ENCODE measurements at regions of chr18 and their contacts with region 1.

Region 1: GRCh38 chr18:51197661-51198424 is at the start of gene MEX3C:
- DNase-seq: peak; percentile 96 to 100 (median 99)
- H3K4me3 ChIP-seq: peak within 1 kb of the TSS; percentile 68 to 95 (median 86)
- H3K27ac ChIP-seq: peak within 1 kb of the TSS; percentile 74 to 99 (median 94)
- H3K27me3 ChIP-seq: no peaks in the 10 kb centered on the region
- CTCF ChIP-seq: peak in 54 of 56 donors; percentile 18 to 70 (median 50)
- total RNA-seq, gene MEX3C: 16.1 to 34.8 (median 23.9) TPM

Region 2: GRCh38 chr18:50287441-50288347 is 910.1 kb before region 1 on chr18 and contains the start of gene CXXC1:
- intact Hi-C with region 1: loop called in 1 of 2 experiments (anchors 10 kb)
- DNase-seq: peak; percentile 97 to 100 (median 99)
- H3K4me3 ChIP-seq: peak within 1 kb of the TSS; percentile 52 to 98 (median 83)
- H3K27ac ChIP-seq: peak within 1 kb of the TSS; percentile 68 to 98 (median 93)
- H3K27me3 ChIP-seq: no peaks in the 10 kb centered on the region
- CTCF ChIP-seq: peak in 52 of 56 donors; percentile 25 to 70 (median 53)
- total RNA-seq, gene CXXC1: 39.4 to 103 (median 69.4) TPM

Region 3: DNA sequence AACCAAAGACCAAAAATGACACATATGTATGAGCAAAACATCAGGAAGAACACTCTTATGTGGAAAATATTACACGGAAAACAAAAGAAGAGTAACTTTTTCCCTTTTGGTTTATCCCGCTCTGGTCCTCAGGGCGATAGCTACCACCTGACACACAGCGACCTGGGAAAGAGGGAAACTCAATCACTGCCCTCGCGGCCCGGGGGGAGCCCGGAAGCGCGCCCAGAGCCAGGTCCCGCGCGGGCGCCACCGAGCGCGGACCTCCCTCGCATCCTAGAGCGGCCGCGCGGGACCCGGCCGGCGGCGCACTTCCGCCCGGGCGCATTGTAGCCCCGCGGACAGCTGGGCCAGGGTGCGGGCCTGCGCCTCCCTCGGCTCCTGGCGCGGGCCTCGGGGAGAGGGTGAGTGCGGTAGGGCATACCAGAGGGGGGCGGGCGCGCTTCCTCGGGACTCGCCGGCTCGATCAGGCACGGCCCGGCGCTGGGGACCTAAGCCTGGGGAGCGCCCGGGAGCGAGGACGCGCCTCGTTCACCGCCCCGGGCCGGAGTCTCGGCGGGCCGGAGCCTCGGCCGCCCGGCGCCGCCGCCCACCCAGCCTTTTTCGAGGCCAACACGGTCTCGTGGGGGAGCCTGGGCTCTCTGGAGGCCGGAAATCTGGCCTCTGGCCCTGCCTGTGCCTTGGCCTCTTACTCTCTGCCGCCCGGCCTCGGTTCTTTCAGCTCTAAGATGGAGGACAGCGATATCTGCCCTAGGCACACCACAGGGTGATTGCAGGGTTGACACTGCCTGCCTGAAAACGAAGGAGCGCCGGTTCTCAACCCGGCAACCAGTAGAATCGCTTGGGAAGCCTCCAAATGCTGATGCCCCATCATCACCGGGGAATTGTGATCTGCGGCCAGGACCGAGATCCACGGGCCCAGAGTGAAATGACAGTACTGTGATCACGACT is 229.9 kb before region 1 on chr18 and contains the start of gene ELAC1:
- intact Hi-C with region 1: loop called (anchors 5 to 10 kb)
- DNase-seq: peak; percentile 49 to 87 (median 70)
- H3K4me3 ChIP-seq: peak within 1 kb of the TSS; percentile 60 to 99 (median 85)
- H3K27ac ChIP-seq: peak within 1 kb of the TSS; percentile 87 to 99 (median 97)
- H3K27me3 ChIP-seq: no peaks in the 10 kb centered on the region
- CTCF ChIP-seq: peak in 37 of 56 donors; percentile 7 to 64 (median 29)
- total RNA-seq, gene ELAC1: 3.6 to 15.4 (median 8.0) TPM

Region 4: GRCh38 chr18:51110073-51110803 is 87.6 kb before region 1 on chr18:
- intact Hi-C with region 1: loop called in 1 of 2 experiments (anchors 5 kb)
- DNase-seq: peak; percentile 46 to 84 (median 58)
- H3K4me3 ChIP-seq: peak overlapping the region in 27 of 59 donors; percentile 14 to 51 (median 37)
- H3K27ac ChIP-seq: no peak overlapping the region
- H3K27me3 ChIP-seq: no peaks in the 10 kb centered on the region
- CTCF ChIP-seq: peak in 55 of 56 donors; percentile 69 to 98 (median 93)

Region 5: GRCh38 chr18:51211552-51211951 is 13.7 kb after region 1 on chr18:
- intact Hi-C with region 1: no loop called
- DNase-seq: no peak
- H3K4me3 ChIP-seq: no peak overlapping the region
- H3K27ac ChIP-seq: no peak overlapping the region
- H3K27me3 ChIP-seq: no peaks in the 10 kb centered on the region
- CTCF ChIP-seq: no peak

Region 6: GRCh38 chr18:51398104-51398503 is 200.3 kb after region 1 on chr18:
- intact Hi-C with region 1: loop called (anchors 5 to 10 kb)
- DNase-seq: no peak
- H3K4me3 ChIP-seq: peak overlapping the region in 10 of 59 donors; percentile 3 to 29 (median 8)
- H3K27ac ChIP-seq: peak overlapping the region; percentile 53 to 94 (median 86)
- H3K27me3 ChIP-seq: no peaks in the 10 kb centered on the region
- CTCF ChIP-seq: no peak